ENCODE measurements at regions of chr1 and their contacts with region 1.

Region 1: DNA sequence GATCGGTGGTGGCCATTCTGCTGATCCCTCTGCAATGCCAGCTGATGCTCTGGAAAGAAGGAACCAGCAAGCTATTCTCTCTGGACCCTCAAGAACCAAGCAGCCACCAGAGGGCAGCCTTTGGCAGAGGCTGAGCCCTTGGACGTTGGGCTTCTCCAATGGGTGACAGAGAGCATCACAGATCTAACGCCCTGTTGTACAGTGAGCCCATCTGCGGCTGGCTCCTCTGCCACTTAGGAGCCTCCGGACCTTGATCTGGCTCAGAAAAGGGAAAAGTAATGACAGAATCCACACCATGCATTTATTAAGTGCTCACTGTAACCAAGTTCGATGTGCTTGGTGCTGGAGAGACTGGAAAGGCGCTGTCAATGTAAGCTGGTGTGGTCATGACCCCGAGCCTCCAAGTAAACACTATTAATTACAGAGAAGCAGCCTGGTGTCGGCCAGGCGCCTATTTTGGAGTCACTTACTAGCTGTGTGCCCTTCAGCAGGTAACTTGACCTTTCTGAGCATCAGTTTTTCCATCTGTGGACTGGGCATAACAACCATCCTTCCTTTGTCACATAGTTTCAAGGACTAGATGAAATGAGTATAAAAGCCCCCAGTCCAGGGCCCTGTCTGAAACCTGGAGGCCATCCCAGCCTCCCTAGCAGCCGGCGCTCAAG is 34.9 kb downstream of the ECE1 start:
- DNase-seq: peak; percentile 94

Region 2: DNA sequence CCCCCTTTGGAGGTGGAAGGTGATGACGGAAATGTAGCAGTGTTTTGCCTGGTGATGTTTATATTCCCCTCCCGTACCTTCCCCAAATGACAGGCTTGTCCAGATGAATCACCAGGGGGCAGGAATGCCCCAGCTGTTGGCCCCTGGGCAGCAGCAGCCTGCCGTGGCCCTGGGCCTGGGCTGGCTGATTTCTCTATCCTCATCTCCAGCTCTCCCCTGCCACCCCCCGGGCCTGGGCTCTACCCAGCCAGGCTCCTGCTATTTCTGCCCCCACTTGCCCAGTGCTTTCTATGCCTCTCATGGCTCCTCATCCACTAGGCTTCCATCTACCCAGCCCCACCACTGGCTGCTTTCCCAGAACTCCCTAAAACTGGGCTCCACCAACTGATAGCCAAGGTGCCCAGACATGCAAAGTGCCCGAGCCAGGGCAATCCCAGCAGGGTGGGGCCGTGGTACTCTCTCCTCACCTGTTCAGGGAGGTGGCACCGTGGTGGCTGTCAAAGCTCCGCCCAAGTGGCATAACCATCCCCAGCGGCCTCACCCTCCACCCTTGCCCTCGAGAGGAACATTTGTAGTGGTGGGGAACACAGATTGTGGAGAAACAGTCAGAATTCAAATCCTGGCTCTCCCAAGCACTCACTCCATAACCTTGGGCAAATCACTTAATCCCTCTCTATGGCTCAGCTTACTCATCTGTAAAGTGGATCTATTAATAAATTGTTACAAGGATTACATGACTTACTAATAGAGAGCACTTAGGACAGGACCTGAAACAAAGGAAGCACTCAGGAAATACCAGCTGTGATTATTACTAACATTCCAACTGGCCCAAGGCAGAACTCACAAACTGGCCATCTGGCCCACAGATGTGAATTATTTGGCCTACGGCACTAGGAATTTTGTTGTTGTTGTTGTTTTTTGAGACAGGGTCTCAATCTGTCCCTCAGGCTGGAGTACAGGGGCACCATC is 47.6 kb after region 1 on chr1:
- intact Hi-C with region 1: loop called (anchors 5 kb)
- DNase-seq: no peak

Region 3: GRCh38 chr1:21334214-21335087 is 79.0 kb after region 1 on chr1:
- intact Hi-C with region 1: loop called (anchors 1 kb)
- DNase-seq: peak; percentile 95

Region 4: DNA sequence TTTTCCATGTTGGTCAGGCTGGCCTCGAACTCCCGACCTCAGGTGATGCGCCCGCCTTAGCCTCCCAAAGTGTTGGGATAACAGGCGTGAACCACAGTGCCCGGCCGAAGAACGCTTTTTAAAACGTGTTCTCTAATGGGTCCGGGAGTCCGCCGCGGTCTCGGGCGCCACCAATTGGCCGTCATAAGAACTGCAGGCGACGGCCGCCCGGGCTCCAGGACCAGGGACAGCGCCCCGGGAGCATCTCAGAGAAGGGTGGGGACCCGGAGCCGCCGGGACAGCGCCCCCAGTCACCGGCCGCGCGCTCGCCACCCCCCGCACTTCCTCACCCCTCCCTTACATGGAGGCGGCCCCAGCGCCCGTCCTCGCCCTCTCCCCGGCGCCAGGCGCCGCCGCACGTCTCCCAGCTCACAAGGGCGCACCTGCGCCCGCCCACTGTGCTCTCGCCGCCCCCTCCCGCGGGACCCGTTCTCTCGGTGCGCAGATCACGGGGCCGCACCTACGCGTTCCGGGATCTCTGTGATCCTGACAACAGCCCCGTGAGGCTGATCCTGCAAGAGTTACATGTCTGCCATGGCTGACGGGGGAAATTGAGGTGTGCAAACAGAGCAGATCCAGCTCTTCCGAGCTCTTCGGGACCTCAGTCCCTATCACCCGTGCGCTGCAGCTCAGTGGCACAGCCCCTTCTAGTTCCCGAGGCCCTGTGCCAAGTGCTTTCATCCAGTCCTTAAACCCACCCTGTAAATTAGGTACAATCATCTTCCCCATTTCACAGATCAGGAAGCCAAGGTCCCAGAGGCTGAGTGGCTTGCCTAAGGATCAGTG is 403.9 kb after region 1 on chr1:
- intact Hi-C with region 1: no loop called
- DNase-seq: peak; percentile 90

Measured in cardiac septum (tissue), 1 donor.